Cardiac septum (tissue), 1 donor: ENCODE measurements at regions of chr4 and their contacts with region 1.

Region 1: DNA sequence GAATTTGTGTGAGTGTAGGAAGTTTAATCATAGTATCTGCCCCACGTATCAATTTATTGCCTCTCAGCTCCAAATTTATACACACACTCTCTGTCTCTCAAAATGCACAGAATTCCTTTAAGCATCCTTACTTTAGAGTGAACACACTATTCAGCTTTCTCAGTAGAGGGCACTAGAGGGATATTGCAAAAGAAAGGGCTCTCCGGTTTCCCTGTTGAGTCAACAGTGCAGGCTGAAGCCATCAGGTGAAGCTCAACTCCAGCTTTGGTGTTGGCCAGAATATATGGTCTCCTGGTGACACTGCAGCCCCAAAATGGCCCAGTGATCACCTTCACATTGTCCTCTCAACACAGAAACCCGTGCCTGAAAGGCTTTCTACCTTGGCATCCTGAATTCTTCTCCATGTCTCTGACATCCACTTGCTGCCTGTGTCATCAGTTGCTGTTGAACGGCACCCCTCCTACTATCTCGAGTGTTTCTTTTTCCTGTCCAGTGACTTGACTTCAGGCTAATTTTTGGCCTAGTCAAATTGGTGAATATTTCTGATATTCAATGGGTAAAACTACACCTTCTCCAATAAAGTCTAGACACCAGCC is 670.5 kb downstream of the GABRG1 start:
- DNase-seq: no peak

Region 2: DNA sequence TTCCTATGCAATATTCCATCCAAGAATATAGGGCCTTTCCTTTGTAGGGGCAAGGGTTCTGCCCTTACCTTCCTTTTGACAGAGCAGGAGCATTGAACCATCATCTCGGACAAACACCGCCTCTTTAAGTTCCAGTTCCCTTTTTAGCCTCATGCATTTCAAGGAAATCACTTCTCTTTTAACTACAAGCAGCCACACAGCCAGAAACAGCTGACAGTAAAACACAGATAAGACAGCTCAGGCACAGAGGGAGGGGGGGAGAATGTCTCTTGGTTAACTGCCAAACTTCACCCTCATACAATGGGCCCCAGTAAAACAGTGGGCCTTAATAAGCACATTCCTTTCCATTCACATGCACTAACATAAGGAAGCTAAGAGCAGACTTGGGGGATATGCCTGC is 22.2 kb after region 1 on chr4:
- intact Hi-C with region 1: no loop called
- DNase-seq: no peak

Region 3: DNA sequence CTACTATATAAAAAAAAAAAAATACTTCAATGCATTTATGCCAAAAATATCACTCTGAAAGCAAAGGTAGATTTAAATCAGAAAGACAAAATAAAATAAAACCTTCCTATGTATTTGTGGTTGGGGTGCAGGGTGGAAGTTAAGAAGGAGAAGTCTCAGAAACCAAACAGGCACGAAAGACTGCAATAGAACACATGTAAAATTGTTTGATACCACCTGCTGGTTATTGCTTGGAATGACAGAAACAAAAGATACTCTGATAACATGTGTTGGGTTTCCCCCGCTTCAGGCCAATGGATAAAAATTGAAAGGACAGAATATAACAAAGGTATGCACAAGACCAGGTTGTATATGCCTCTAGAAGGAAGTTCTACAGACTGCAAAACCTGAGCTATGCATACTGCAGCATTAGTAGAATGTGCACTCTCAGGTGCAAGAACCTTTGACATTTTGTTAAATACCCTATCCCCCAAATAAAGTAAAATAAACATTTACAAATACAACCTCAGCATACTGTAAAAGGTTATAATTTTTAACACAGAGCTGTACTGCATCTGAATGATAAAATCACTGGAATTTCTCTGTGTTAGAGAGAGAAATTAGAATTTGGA is 817.7 kb after region 1 on chr4:
- intact Hi-C with region 1: loop called (anchors 5 kb)
- DNase-seq: no peak